ENCODE measurements at regions of chr5 and their contacts with region 1.

Region 1: DNA sequence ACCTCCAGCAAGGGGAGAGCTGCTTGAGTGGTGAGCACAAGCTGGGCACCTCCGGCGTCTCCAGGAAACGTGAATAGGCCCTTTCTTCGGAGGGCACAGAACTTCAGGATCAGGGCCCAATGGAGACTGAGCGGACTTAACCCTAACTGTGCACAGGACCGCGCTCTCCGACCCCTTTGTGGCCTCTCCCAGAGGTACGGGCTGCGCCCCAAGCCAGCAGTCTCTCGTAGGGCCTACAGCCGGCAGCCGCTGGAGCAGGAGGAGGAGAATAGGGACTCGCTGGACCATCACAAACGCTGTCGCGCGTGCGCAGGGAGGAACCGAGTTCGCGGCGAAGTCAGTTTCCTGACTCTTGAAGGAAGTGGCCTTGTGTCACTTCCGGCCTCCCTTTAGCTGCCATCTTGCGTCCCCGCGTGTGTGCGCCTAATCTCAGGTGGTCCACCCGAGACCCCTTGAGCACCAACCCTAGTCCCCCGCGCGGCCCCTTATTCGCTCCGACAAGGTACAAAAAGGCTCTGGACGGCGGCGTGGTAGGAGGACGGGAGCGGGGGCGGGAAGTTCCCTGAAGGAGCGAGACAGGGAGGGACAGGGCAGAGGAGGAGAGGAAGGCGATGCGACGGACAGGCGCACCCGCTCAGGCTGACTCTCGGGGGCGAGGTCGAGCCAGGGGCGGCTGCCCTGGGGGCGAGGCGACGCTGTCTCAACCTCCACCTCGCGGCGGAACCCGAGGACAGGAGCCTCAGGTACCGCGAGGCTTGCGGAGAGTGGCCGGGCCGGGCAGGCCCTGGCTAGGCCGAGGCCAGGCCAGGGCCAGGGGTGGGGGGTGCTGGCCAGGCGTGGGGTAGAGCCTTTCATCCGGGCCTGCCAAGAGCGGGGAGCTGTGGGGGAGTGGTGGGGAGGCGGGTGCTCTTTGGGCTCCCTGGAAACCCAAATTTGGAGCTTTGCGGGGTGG is at the start of gene BTF3:
- DNase-seq: peak; percentile 86 to 97 (median 90)
- ATAC-seq: peak; percentile 90
- H3K4me3 ChIP-seq: peak within 1 kb of the TSS; percentile 88
- H3K4me3 Mint-ChIP-seq: peak within 1 kb of the TSS; percentile 99
- H3K27ac ChIP-seq: peak within 1 kb of the TSS; percentile 97
- H3K27ac Mint-ChIP-seq: peak within 1 kb of the TSS; percentile 100
- H3K4me1 ChIP-seq: peaks cover 21% of the 10 kb centered on the region
- H3K4me1 Mint-ChIP-seq: peaks cover 45% of the 10 kb centered on the region
- H3K27me3 ChIP-seq: peaks cover 0 to 4% of the 10 kb centered on the region in 2 experiments
- H3K27me3 Mint-ChIP-seq: peaks cover 12% of the 10 kb centered on the region
- CTCF ChIP-seq: no peak
- total RNA-seq, gene BTF3: 756 to 769 TPM

Region 2: DNA sequence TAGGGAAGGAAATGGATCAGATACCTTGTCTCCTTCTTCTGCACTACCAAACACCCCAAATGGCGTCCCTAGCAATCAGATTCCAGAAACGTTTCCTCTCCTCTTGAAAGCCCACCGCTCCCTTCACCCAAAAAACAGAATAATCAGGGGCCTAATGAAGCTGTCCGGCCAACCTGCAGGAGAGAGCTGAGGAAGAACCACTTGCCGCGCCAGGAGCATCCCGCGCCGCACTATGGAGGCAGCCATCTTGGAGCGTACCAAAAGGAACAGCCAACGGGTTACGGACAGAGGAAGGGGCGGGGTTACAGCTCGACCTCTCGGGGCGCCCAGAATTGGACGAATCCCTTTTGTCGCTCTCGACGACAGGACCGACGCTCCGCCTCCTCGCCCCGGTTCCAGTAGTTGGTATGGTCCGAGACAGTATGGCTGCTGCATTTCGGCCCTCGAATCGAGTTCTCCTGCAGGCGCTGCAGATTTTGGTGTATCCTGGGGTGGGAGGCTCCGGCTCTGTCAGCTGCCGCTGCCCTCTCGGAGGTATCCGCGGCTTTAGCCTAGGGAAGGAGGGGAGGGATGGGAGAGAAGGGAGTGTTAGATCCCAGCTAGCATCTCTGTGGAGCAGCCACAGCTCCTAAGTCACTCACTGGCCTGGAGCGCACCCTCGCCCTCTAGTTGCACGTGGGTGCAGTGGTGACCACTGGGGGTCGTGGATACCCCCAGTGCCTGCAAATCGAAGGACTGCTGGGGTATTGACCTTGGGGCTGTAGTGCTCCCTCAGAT is 1178.2 kb before region 1 on chr5 and contains the starts of genes MRPS27 and PTCD2:
- CTCF ChIA-PET with region 1: no interaction called
- POLR2A ChIA-PET with region 1: interaction called, 4 read pairs
- intact Hi-C with region 1: loop called in 1 of 2 experiments (anchors 5 kb)
- DNase-seq: peak; percentile 88 to 99 (median 92)
- ATAC-seq: peak; percentile 99
- H3K4me3 ChIP-seq: peak within 1 kb of the TSS; percentile 94
- H3K4me3 Mint-ChIP-seq: peak within 1 kb of the TSS; percentile 98
- H3K27ac ChIP-seq: peak within 1 kb of the TSS; percentile 62 to 70
- H3K27ac Mint-ChIP-seq: peak within 1 kb of the TSS; percentile 92
- H3K4me1 ChIP-seq: peaks cover 19% of the 10 kb centered on the region
- H3K4me1 Mint-ChIP-seq: peaks cover 34% of the 10 kb centered on the region
- H3K27me3 ChIP-seq: no peaks in the 10 kb centered on the region
- H3K27me3 Mint-ChIP-seq: no peaks in the 10 kb centered on the region
- CTCF ChIP-seq: no peak
- total RNA-seq, gene MRPS27: 25.0 to 26.1 TPM
- total RNA-seq, gene PTCD2: 2.9 to 3.3 TPM

Region 3: GRCh38 chr5:72816311-72817145 is 681.8 kb before region 1 on chr5 and contains the start of gene TNPO1:
- CTCF ChIA-PET with region 1: no interaction called
- POLR2A ChIA-PET with region 1: interaction called, 3 read pairs
- intact Hi-C with region 1: loop called in 1 of 2 experiments (anchors 10 kb)
- DNase-seq: peak; percentile 70 to 93 (median 79)
- ATAC-seq: peak; percentile 71
- H3K4me3 ChIP-seq: peak within 1 kb of the TSS; percentile 87
- H3K4me3 Mint-ChIP-seq: peak within 1 kb of the TSS; percentile 89
- H3K27ac ChIP-seq: peak within 1 kb of the TSS; percentile 79 to 87
- H3K27ac Mint-ChIP-seq: peak within 1 kb of the TSS; percentile 86
- H3K4me1 ChIP-seq: peaks cover 15% of the 10 kb centered on the region
- H3K4me1 Mint-ChIP-seq: peaks cover 30% of the 10 kb centered on the region
- H3K27me3 ChIP-seq: peaks cover 3 to 4% of the 10 kb centered on the region in 2 experiments
- H3K27me3 Mint-ChIP-seq: peaks cover 22% of the 10 kb centered on the region
- CTCF ChIP-seq: no peak
- total RNA-seq, gene TNPO1: 69.6 to 74.7 TPM

Region 4: GRCh38 chr5:73448463-73449136 is 49.7 kb before region 1 on chr5 and contains the start of gene FOXD1:
- CTCF ChIA-PET with region 1: interaction called, 5 read pairs
- POLR2A ChIA-PET with region 1: interaction called, 3 read pairs
- intact Hi-C with region 1: loop called (anchors 2 to 5 kb)
- DNase-seq: peak in 6 of 14 experiments; percentile 26 to 63 (median 46)
- ATAC-seq: peak; percentile 29
- H3K4me3 ChIP-seq: peak within 1 kb of the TSS; percentile 54
- H3K4me3 Mint-ChIP-seq: peak within 1 kb of the TSS; percentile 88
- H3K27ac ChIP-seq: no peak within 1 kb of the TSS
- H3K27ac Mint-ChIP-seq: peak within 1 kb of the TSS; percentile 68
- H3K4me1 ChIP-seq: peaks cover 41% of the 10 kb centered on the region
- H3K4me1 Mint-ChIP-seq: peaks cover 20% of the 10 kb centered on the region
- H3K27me3 ChIP-seq: peaks cover 65 to 84% of the 10 kb centered on the region in 2 experiments
- H3K27me3 Mint-ChIP-seq: peaks cover 87% of the 10 kb centered on the region
- CTCF ChIP-seq: no peak
- total RNA-seq, gene FOXD1: not detected

Region 5: GRCh38 chr5:73454351-73455036 is 43.8 kb before region 1 on chr5:
- CTCF ChIA-PET with region 1: interaction called, 5 read pairs
- POLR2A ChIA-PET with region 1: interaction called, 3 read pairs
- intact Hi-C with region 1: loop called (anchors 2 to 5 kb)
- DNase-seq: peak in 9 of 14 experiments; percentile 17 to 75 (median 34)
- ATAC-seq: peak; percentile 92
- H3K4me3 ChIP-seq: no peak overlapping the region
- H3K4me3 Mint-ChIP-seq: no peak overlapping the region
- H3K27ac ChIP-seq: no peak overlapping the region
- H3K27ac Mint-ChIP-seq: no peak overlapping the region
- H3K4me1 ChIP-seq: peaks cover 14% of the 10 kb centered on the region
- H3K4me1 Mint-ChIP-seq: no peaks in the 10 kb centered on the region
- H3K27me3 ChIP-seq: peaks cover 54 to 84% of the 10 kb centered on the region in 2 experiments
- H3K27me3 Mint-ChIP-seq: peaks cover 85% of the 10 kb centered on the region
- CTCF ChIP-seq: peak; percentile 82

Region 6: DNA sequence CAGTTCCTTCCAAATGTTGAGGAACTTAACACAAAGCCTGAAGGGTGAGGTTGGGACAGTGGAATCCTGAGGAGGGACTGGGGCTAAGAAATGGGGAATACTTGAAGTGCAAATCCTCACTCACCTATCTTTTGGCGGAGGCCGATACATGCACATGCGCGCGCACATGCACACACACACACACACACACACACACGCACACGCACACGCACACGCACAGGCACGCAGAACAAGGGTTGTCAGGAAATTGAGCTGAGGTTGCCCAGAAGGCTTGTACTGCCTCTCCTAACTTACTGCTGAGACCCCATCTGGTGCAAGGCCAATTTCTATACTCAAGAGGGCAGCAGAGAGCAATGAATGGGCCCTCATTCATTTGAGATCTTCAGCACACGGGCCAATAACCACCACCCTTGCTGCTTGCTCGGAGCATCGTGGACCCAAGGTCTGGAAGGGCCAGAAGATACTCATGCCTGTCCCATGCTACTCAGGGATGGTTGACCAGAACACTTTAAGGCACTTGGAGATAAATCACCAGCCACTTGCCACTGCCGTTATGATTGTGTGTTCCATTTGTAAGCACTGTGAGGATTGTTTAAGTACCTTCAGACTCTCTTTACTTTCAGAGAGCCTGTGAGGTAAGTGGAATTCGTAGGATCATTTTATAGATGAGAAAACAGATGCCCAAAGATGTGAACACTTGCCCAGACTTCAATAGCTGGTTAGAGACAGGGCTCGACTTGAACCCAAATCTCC is 21.4 kb after region 1 on chr5:
- CTCF ChIA-PET with region 1: no interaction called
- POLR2A ChIA-PET with region 1: interaction called, 14 read pairs
- intact Hi-C with region 1: no loop called
- DNase-seq: peak; percentile 38 to 89 (median 56)
- ATAC-seq: peak; percentile 99
- H3K4me3 ChIP-seq: no peak overlapping the region
- H3K4me3 Mint-ChIP-seq: peak overlapping the region; percentile 20
- H3K27ac ChIP-seq: no peak overlapping the region
- H3K27ac Mint-ChIP-seq: peak overlapping the region; percentile 3
- H3K4me1 ChIP-seq: peaks cover 9% of the 10 kb centered on the region
- H3K4me1 Mint-ChIP-seq: peaks cover 8% of the 10 kb centered on the region
- H3K27me3 ChIP-seq: no peaks in the 10 kb centered on the region
- H3K27me3 Mint-ChIP-seq: no peaks in the 10 kb centered on the region
- CTCF ChIP-seq: peak; percentile 76

Region 7: DNA sequence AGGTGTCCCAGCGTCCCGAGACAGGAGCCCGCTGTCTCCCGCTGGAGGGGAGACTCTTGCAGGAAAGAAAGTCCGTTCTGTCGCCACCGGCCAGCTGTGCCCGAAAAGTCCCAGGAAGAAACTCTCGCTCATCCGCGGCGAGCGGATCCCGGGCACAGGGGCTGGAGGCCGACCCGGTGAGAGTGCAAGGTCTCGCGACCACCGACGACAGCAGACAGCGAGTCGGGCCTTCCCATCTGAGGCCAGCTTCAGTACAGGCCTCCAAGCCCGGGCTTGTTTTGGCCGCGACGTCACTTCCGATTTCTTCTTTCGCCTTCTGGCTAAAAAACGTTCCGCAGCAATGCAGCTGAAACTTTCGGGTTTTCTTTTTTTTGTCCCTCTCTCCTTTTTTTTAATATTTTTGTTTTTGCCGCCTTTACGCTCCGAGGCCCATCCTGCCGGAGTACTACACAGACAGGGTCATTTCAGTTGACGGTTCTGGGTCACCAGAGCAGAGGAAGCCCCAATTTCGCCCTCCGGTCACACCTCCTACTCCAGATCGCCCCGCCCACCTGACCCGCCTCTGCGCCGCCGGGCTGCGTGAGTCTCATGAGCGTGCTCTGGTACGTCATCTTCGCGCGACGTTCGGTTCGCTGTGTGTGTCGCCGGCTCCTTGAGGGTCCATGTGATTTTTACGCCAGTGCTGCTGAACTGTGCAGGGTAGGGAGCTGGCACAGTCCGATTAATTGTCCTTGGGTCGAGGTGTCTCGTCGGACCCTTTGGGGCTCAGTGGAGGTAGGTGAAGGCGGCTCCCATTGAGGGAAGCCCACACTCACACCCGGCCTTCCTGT is 67.0 kb after region 1 on chr5 and contains the starts of genes ANKRA2 and UTP15:
- CTCF ChIA-PET with region 1: no interaction called
- POLR2A ChIA-PET with region 1: interaction called, 22 read pairs
- intact Hi-C with region 1: loop called in 1 of 2 experiments (anchors 2 kb)
- DNase-seq: peak; percentile 96 to 100 (median 98)
- ATAC-seq: peak; percentile 92
- H3K4me3 ChIP-seq: peak within 1 kb of the TSS; percentile 81
- H3K4me3 Mint-ChIP-seq: peak within 1 kb of the TSS; percentile 93
- H3K27ac ChIP-seq: peak within 1 kb of the TSS; percentile 90 to 94
- H3K27ac Mint-ChIP-seq: peak within 1 kb of the TSS; percentile 95
- H3K4me1 ChIP-seq: peaks cover 14% of the 10 kb centered on the region
- H3K4me1 Mint-ChIP-seq: peaks cover 63% of the 10 kb centered on the region
- H3K27me3 ChIP-seq: no peaks in the 10 kb centered on the region
- H3K27me3 Mint-ChIP-seq: no peaks in the 10 kb centered on the region
- CTCF ChIP-seq: no peak
- total RNA-seq, gene ANKRA2: 45.0 to 45.1 TPM
- total RNA-seq, gene UTP15: 52.0 to 55.2 TPM